Endothelial cell of umbilical vein (primary cell): ENCODE measurements at regions of chr2 and their contacts with region 1.

Region 1: DNA sequence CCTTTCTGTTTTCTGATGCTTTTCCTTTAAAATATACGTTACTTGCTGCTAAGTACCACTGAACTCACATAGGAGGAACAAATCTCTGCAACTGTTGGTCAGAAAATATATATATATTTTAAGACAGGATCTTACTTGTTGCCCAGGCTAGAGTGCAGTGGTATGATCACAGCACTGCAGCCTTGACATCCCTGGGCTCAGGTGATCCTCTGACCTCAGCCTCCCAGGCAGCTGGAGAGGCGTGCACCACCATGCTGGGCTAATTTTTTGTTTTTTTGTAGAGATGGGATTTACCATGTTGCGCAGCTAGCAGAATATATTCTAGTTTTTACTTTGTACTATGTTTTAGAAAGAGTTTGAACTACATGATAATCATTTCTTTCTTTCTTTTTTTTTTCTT is 51.5 kb downstream of the EHBP1 start:
- DNase-seq: no peak
- H3K4me3 ChIP-seq: no peak overlapping the region
- H3K27ac ChIP-seq: no peak overlapping the region
- H3K4me1 ChIP-seq: no peaks in the 10 kb centered on the region
- H3K27me3 ChIP-seq: no peaks in the 10 kb centered on the region
- CTCF ChIP-seq: no peak
- POLR2A ChIP-seq: no peak

Region 2: DNA sequence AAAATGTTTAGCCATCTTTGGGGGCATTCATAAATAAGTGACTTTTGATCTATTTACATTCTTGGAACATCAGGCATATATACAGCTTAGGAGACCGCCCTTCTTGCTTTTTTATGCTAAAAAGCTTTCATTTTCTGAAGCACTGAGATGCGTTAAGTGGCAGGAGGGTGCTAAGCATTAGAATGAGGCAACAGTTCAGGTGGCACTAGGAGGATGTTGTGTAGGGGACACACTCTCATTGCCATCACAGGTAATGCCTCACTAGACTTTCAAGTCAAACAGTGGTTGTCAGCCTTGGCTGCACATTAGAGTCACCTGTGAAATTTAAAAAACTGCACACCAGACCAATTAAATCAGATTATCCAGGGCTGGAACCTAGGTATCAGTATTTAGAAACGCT is 12.4 kb before region 1 on chr2:
- CTCF ChIA-PET with region 1: interaction called, 10 read pairs
- POLR2A ChIA-PET with region 1: no interaction called
- dilution Hi-C with region 1: no loop called
- intact Hi-C with region 1: no loop called
- DNase-seq: no peak
- H3K4me3 ChIP-seq: no peak overlapping the region
- H3K27ac ChIP-seq: no peak overlapping the region
- H3K4me1 ChIP-seq: no peaks in the 10 kb centered on the region
- H3K27me3 ChIP-seq: no peaks in the 10 kb centered on the region
- CTCF ChIP-seq: no peak
- POLR2A ChIP-seq: no peak

Region 3: GRCh38 chr2:62996534-62997186 is 239.6 kb after region 1 on chr2:
- CTCF ChIA-PET with region 1: no interaction called
- POLR2A ChIA-PET with region 1: no interaction called
- dilution Hi-C with region 1: no loop called
- intact Hi-C with region 1: no loop called
- DNase-seq: no peak
- H3K4me3 ChIP-seq: no peak overlapping the region
- H3K27ac ChIP-seq: no peak overlapping the region
- H3K4me1 ChIP-seq: peaks cover 8% of the 10 kb centered on the region
- H3K27me3 ChIP-seq: no peaks in the 10 kb centered on the region
- CTCF ChIP-seq: no peak
- POLR2A ChIP-seq: no peak